ENCODE measurements at regions of chrX and their contacts with region 1.

Region 1: DNA sequence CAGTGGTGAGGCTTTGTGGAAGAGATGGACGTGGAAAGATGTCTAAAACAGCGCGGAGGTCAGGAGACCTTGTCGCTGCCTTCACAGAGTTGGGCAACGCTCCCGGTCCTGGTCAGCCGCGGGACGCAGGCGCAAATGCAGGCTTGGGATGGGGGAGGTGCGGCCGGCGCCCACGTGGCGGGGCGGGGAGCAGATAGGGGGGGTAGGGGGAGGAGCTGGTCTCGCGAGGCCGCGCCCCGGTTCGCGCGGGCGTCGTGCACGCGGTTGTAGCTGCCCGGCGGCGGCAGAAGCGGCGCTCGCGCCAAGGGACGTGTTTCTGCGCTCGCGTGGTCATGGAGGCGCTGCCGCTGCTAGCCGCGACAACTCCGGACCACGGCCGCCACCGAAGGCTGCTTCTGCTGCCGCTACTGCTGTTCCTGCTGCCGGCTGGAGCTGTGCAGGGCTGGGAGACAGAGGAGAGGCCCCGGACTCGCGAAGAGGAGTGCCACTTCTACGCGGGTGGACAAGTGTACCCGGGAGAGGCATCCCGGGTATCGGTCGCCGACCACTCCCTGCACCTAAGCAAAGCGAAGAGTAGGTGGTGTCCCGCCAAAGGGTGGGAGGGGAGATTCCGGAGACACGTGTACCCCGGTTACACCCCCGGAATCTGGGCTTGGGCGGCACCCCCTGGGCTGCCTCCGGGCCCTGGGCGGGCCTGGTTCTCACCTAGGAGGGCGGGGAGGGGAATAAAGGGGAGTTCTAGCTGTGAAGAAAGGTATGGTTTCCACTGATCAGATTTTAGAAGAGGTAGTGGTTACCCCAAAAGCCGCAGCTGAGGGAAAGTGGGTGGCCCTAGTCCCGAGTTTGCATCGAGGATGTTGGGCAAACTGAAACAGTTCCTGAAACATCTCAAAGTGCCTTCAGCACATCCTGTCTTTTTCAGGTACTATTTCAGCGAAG is at the start of gene PRDX4:
- DNase-seq: peak; percentile 82
- H3K4me3 Mint-ChIP-seq: peak within 1 kb of the TSS; percentile 84
- H3K27ac Mint-ChIP-seq: peak within 1 kb of the TSS; percentile 90
- H3K4me1 Mint-ChIP-seq: peaks cover 30% of the 10 kb centered on the region
- H3K27me3 Mint-ChIP-seq: no peaks in the 10 kb centered on the region
- total RNA-seq, gene PRDX4: 39.6 to 40.0 TPM

Region 2: DNA sequence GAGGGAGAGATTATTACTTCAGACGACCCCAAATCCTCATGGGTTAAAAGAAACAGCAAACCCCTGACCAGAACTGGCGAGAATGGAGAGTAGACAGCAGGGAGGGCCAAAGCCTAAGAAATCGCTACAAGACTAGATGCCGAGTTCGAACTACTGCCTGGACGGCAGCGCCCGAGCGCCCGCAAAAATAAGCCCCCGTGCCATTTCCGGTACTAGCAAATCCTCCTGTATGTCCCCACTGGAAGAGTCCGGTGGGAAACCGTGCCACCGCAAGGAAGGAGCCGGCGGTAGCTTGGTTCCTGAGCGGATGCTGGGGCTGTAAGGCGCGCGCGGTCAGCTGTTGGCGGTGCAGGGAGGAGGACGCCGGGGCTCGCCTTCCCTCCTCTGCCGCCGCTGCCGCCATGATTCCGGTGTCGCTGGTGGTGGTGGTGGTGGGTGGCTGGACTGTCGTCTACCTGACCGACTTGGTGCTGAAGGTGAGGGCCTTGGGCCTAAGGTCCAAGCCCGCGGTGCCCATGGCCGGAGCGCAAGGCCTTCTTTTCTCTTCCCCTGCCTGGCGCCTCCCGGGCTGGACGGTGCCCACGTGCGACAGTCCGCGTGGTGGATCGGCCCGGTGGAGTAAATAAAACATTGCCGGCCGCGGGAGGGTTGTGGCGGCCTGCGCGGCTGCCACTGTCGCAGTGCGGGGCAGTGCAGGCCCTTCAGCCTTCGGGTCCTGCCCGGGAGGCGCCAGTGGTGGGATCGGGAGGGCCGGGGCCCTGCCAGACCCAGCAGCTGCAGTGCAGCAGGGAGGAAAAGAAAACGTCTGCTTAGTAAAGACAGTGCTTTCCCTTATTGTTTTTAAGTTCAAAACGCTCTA is 1827.9 kb before region 1 on chrX and contains the start of gene MBTPS2:
- CTCF ChIA-PET with region 1: no interaction called
- intact Hi-C with region 1: loop called (anchors 10 kb)
- DNase-seq: peak; percentile 86
- H3K4me3 Mint-ChIP-seq: peak within 1 kb of the TSS; percentile 81
- H3K27ac Mint-ChIP-seq: peak within 1 kb of the TSS; percentile 92
- H3K4me1 Mint-ChIP-seq: peaks cover 9% of the 10 kb centered on the region
- H3K27me3 Mint-ChIP-seq: no peaks in the 10 kb centered on the region
- total RNA-seq, gene MBTPS2: 4.7 to 5.4 TPM

Region 3: DNA sequence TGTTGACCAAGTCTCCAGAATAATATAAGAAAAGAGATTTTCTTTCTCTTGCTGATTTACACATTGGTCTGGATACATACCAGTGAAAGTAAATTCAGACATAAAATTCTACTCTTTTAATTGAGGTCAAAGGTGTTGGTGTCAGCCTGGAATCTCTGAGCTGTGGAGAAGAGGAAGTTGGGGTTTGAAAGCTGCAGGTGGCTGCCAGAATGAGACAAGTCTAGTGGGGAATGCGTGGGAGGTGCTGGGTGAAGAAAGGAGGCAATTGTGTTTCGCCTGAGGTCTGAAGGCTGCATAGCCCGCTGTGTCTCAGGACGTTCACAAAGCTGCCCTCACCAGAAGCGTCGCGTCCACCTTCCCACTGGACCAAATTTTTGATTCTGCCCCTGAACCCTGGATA is 1604.2 kb before region 1 on chrX:
- CTCF ChIA-PET with region 1: no interaction called
- intact Hi-C with region 1: loop called (anchors 2 kb)
- DNase-seq: peak; percentile 32
- H3K4me3 Mint-ChIP-seq: no peak overlapping the region
- H3K27ac Mint-ChIP-seq: peak overlapping the region; percentile 60
- H3K4me1 Mint-ChIP-seq: peaks cover 77% of the 10 kb centered on the region
- H3K27me3 Mint-ChIP-seq: no peaks in the 10 kb centered on the region

Region 4: DNA sequence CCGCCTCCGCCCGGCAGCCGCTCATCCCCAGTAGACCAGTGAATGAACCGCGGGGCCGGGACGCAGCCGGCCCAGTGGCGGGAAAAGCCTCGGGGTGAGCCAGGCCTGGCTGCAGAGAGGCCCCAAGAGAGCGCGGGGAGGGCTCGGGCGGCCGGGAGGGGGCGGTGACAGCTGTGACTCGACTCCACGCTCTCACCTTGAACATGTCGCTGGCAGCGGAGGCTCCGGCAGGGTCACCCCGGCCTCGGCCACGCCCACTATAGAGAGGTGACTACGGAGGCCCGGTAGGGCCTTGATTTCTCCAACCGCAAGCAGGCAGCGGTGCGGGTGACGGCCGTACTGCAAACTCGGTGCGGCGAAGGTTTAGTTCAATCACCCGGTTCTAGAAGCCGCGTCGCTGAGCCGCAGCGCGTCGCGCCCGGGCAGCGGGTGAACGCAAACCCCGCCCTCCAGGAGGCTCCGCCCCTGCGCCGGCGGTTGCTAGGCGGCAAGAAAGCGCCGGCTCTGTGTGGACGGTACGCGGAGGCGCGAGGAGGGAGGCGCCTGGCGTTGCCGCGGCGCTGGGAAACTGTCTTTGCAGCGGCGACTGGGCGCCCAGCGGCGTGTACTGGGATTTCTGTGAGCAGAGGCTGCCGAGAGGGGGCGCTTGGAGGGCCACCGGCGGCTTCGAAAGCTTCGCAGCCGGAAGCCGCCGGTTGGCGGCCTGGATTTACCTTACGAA is 240.2 kb after region 1 on chrX and contains the starts of genes APOO and CXorf58:
- CTCF ChIA-PET with region 1: interaction called, 6 read pairs
- intact Hi-C with region 1: loop called (anchors 10 kb)
- DNase-seq: peak; percentile 93
- H3K4me3 Mint-ChIP-seq: peak within 1 kb of the TSS; percentile 75
- H3K27ac Mint-ChIP-seq: peak within 1 kb of the TSS; percentile 91
- H3K4me1 Mint-ChIP-seq: peaks cover 21% of the 10 kb centered on the region
- H3K27me3 Mint-ChIP-seq: no peaks in the 10 kb centered on the region
- total RNA-seq, gene APOO: 41.3 to 49.5 TPM
- total RNA-seq, gene CXorf58: 0.20 TPM in 1 of 2 experiments, not detected in the other

Region 5: DNA sequence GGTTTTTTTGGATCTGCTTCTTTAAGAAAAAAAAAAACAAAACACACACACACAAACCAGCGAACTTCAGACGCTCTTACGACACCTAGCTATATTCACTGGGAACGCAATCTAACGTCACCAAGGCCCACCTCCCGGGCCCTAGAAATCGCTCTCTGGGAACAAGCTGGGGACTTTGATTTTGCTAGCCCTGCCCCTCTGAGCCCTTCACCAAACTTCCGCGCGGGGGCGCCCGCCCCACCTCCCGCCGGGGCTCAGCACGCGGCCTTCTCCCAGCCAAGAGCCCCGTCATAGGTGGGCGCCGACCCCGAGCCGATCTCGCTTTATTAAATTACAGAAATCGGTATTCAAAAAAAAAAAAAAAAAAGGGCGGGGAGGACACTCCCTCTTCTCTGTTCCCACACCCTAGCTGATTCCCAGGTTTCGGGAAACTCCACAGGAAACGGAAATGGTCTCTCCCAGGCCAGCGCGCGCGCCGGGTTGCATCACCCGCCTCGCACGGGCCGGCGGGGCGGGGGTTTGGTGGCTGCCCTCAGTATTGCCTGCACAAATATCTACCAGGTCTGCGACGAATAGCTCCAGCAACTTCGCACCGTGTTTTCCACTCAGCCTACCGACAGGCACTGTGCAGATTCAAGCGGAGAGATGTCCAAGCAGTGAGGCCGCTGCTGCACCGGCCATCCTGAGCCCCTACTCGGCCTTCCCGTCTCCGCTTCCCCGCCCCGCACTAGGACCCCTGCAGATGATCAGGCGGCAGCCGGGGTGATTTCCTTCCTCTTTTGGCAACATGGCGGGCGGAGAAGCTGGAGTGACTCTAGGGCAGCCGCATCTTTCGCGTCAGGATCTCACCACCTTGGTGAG is 386.9 kb after region 1 on chrX and contains the start of gene EIF2S3:
- CTCF ChIA-PET with region 1: no interaction called
- intact Hi-C with region 1: loop called (anchors 1 kb)
- DNase-seq: peak; percentile 87
- H3K4me3 Mint-ChIP-seq: no peak within 1 kb of the TSS
- H3K27ac Mint-ChIP-seq: no peak within 1 kb of the TSS
- H3K4me1 Mint-ChIP-seq: peaks cover 10% of the 10 kb centered on the region
- H3K27me3 Mint-ChIP-seq: no peaks in the 10 kb centered on the region
- total RNA-seq, gene EIF2S3: 366 to 386 TPM

Region 6: GRCh38 chrX:24682739-24683432 is 1015.4 kb after region 1 on chrX:
- CTCF ChIA-PET with region 1: no interaction called
- intact Hi-C with region 1: loop called (anchors 5 kb)
- DNase-seq: peak; percentile 72
- H3K4me3 Mint-ChIP-seq: no peak overlapping the region
- H3K27ac Mint-ChIP-seq: peak overlapping the region; percentile 59
- H3K4me1 Mint-ChIP-seq: peaks cover 19% of the 10 kb centered on the region
- H3K27me3 Mint-ChIP-seq: peaks cover 6% of the 10 kb centered on the region